H1 (cell line): ENCODE measurements at regions of chr1 and their contacts with region 1.

Region 1: DNA sequence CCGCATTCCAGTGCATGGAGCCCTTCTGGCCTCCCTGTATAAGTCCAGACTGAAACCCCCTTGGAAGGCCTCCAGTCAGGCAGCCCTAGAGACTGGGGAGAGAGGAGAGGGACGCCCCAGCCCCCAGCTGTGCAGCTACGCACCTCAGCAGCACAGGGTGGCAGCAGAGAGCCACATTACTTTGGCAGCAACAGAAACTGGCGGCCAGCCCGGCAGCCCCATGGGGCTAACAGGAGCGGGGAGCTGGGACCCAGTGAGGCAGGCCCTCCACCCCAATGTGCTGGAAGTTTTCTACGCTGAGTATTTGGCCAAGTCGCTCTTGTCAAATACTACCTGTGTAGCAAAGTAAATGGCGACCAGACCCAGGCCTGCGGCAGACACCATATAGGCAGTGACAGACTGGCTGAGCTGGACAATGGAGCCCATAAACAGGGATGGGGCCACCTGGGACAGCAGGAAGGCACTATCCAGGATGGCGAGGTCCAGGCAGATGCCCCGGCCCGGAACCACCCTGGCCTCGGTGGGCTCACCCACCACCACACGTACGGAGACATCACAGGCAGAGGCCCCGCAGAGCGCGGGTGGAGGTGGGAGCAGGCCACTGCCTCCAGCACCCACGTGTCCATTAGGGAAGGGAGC is 21.2 kb downstream of the SLC45A3 start:
- DNase-seq: peak in 1 of 2 experiments; percentile 94
- H3K4me3 ChIP-seq: no peak overlapping the region
- H3K27ac ChIP-seq: no peak overlapping the region
- H3K4me1 ChIP-seq: peaks cover 0 to 10% (median 5%) of the 10 kb centered on the region in 4 experiments; a peak in 5 of 7 replicates
- H3K27me3 ChIP-seq: no peaks in the 10 kb centered on the region; a peak in 1 of 7 replicates
- CTCF ChIP-seq: peak; percentile 91 to 97 (median 94)
- EP300 ChIP-seq: no peak
- POLR2A ChIP-seq: no peak
- RAD21 ChIP-seq: peak; percentile 96 to 99

Region 2: DNA sequence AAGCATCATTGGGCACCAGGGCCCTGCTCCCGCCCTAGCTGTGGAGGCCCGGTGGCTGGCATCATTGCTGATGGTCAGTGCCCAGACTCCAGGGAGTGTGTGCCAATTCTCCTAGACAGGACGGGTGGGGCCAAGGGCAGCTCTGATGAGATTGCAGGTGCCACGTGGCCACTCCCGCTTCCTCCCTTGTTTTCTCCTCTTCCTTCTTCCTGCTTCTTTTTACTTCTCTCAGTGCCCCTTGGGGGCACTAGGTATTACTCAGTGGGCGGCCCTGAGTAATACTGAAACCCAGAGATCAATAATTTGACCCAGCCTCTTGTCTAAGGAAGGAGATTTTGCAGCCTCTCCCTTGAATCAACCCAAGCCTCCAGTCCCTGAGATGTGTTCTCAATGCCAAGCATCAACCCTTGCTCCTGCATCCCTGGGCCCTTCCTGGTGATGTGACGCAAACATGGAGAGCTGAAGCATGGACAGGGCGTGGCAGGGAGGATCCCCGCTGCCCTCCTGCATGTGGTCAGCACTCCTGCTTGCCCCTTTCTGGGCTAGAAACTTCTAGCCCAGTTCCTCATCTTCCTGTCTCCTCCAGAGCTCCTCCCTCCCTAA is 122.2 kb before region 1 on chr1:
- CTCF ChIA-PET with region 1: interaction called, 14 read pairs
- POLR2A ChIA-PET with region 1: no interaction called
- DNase-seq: peak in 1 of 2 experiments; percentile 41
- H3K4me3 ChIP-seq: no peak overlapping the region
- H3K27ac ChIP-seq: no peak overlapping the region
- H3K4me1 ChIP-seq: no peaks in the 10 kb centered on the region; a peak in 2 of 7 replicates
- H3K27me3 ChIP-seq: peaks cover 0 to 19% (median 15%) of the 10 kb centered on the region in 4 experiments; a peak in 6 of 7 replicates
- CTCF ChIP-seq: no peak
- EP300 ChIP-seq: no peak
- POLR2A ChIP-seq: no peak
- RAD21 ChIP-seq: no peak

Region 3: GRCh38 chr1:205591522-205592351 is 67.3 kb before region 1 on chr1:
- CTCF ChIA-PET with region 1: interaction called, 322 read pairs
- POLR2A ChIA-PET with region 1: interaction called, 9 read pairs
- DNase-seq: peak; percentile 58 to 100
- H3K4me3 ChIP-seq: peak overlapping the region; percentile 26 to 57 (median 36); a peak in 5 of 8 replicates
- H3K27ac ChIP-seq: no peak overlapping the region
- H3K4me1 ChIP-seq: peaks cover 0 to 7% (median 4%) of the 10 kb centered on the region in 4 experiments; a peak in 5 of 7 replicates
- H3K27me3 ChIP-seq: 0 out of 7 replicates have a peak, but pooled peaks cover 0 to 2% (median 0%) of the 10 kb centered on the region in 4 experiments
- CTCF ChIP-seq: peak; percentile 91 to 99 (median 94)
- EP300 ChIP-seq: no peak
- POLR2A ChIP-seq: 0 out of 3 replicates have a peak, but pooled peaks of 1 of the 2 experiments have one; percentile 39
- RAD21 ChIP-seq: peak; percentile 98

Region 4: GRCh38 chr1:205645519-205645918 is 13.5 kb before region 1 on chr1:
- CTCF ChIA-PET with region 1: interaction called, 282 read pairs
- POLR2A ChIA-PET with region 1: interaction called, 4 read pairs
- DNase-seq: no peak
- H3K4me3 ChIP-seq: no peak overlapping the region
- H3K27ac ChIP-seq: no peak overlapping the region
- H3K4me1 ChIP-seq: peaks cover 2 to 8% (median 4%) of the 10 kb centered on the region in 4 experiments; a peak in 4 of 7 replicates
- H3K27me3 ChIP-seq: no peaks in the 10 kb centered on the region
- CTCF ChIP-seq: peak in 1 of 3 experiments; percentile 6; a peak in 1 of 4 replicates
- EP300 ChIP-seq: no peak
- POLR2A ChIP-seq: no peak
- RAD21 ChIP-seq: no peak

Region 5: DNA sequence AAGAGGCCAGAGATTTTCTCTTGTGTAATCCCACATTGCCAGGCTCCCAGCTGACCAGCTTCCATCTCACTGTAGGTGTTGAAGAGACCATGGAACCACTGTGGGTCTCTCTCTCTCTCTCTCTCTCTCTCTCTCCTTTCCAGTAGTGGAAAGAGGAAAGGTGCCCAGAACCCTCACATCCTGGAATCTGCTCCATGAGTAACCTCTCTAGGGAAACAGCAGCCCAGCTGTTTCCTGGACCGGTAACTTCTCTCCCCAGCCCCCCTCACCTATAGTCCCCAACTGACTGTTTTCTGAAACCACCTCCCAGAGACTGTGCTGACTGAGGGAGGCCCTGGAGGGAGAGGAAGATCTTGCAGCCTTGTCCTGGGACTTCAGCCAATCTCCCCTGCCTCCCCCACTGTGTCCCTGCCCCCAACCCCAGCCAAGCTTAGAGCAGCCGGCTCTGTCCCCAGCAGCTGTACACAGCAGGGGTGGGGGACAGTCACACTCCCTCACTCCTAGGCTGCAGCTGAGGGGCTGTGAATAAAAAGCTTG is 41.9 kb after region 1 on chr1:
- CTCF ChIA-PET with region 1: interaction called, 856 read pairs
- POLR2A ChIA-PET with region 1: interaction called, 241 read pairs
- DNase-seq: no peak
- H3K4me3 ChIP-seq: peak overlapping the region in 1 of 4 experiments; percentile 6; a peak in 1 of 8 replicates
- H3K27ac ChIP-seq: no peak overlapping the region
- H3K4me1 ChIP-seq: peaks cover 0 to 7% (median 5%) of the 10 kb centered on the region in 4 experiments; a peak in 4 of 7 replicates
- H3K27me3 ChIP-seq: no peaks in the 10 kb centered on the region
- CTCF ChIP-seq: no peak
- EP300 ChIP-seq: no peak
- POLR2A ChIP-seq: no peak
- RAD21 ChIP-seq: 0 out of 4 replicates have a peak, but pooled peaks of 1 of the 2 experiments have one; percentile 1

Region 6: DNA sequence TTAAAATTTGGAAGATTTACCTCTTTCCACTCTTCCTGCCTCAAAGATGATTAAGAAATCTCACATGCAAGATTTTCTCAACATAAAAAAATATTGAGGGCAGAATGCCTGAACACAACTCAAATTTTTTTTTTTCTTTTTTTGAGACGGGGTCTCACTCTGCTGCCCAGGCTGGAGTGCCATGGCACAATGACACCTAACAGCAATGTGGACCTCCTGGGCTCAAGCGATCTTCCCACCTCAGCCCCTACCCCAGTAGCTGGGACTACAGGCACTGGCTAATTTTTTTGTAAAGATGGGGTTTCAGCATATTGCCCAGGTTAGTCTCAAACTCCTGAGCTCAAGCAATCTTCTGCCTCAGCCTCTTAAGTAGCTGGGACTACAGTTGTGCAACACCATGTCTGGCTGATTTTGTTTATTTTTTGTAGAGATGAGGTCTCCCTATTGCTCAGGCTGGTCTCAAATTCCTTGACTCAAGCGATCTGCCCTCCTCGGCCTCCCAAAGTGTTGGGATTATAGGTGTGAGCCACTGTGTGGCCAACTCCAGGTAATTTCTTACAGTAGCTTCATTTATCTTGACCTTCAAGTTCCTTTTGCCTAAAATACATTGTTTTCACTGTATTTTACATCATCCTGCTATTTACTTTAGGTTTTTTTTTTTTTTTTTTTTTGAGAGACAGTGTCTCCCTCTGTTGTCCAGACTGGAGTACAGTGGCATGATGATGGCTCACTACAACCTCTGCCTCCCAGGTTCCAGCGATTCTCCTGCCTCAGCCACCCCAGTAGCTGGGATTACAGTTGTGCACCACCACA is 80.5 kb after region 1 on chr1:
- CTCF ChIA-PET with region 1: interaction called, 32 read pairs
- POLR2A ChIA-PET with region 1: no interaction called
- DNase-seq: no peak
- H3K4me3 ChIP-seq: no peak overlapping the region
- H3K27ac ChIP-seq: no peak overlapping the region
- H3K4me1 ChIP-seq: peaks cover 3 to 11% (median 7%) of the 10 kb centered on the region in 4 experiments; a peak in 5 of 7 replicates
- H3K27me3 ChIP-seq: no peaks in the 10 kb centered on the region
- CTCF ChIP-seq: peak in 1 of 3 experiments; percentile 7; a peak in 1 of 4 replicates
- EP300 ChIP-seq: no peak
- POLR2A ChIP-seq: no peak
- RAD21 ChIP-seq: no peak